ENCODE measurements at regions of chr21 and their contacts with region 1.

Region 1: GRCh38 chr21:34202553-34203372 is 129.4 kb downstream of the MRPS6 start:
- DNase-seq: peak; percentile 38 to 48
- H3K4me3 ChIP-seq: peak overlapping the region; percentile 57
- H3K4me3 Mint-ChIP-seq: peak overlapping the region; percentile 85
- H3K27ac Mint-ChIP-seq: peak overlapping the region; percentile 87
- H3K4me1 ChIP-seq: peaks cover 16% of the 10 kb centered on the region
- H3K4me1 Mint-ChIP-seq: peaks cover 17% of the 10 kb centered on the region
- H3K27me3 ChIP-seq: no peaks in the 10 kb centered on the region
- H3K27me3 Mint-ChIP-seq: no peaks in the 10 kb centered on the region
- CTCF ChIP-seq: no peak

Region 2: DNA sequence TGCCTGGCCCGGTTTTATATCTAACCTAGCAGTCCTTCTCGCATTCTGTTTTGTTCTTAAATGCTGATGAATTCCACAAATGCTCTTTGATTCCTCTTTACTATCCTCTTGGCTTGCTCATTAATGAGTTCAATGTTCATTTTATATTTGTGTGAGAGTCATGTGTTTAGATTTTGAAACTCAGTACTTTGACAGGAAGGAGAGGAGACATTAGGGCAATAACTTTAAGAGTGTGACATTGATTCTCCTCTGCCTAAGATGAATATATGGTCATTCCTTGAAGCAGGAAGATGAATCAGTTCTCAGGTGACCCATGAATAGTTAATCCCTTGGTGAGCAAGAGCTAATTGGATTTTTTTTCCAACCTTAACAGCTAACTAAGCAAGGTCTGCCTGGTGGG is 45.2 kb before region 1 on chr21:
- CTCF ChIA-PET with region 1: no interaction called
- POLR2A ChIA-PET with region 1: interaction called, 11 read pairs
- intact Hi-C with region 1: no loop called
- DNase-seq: no peak
- H3K4me3 ChIP-seq: no peak overlapping the region
- H3K4me3 Mint-ChIP-seq: no peak overlapping the region
- H3K27ac Mint-ChIP-seq: no peak overlapping the region
- H3K4me1 ChIP-seq: no peaks in the 10 kb centered on the region
- H3K4me1 Mint-ChIP-seq: no peaks in the 10 kb centered on the region
- H3K27me3 ChIP-seq: no peaks in the 10 kb centered on the region
- H3K27me3 Mint-ChIP-seq: no peaks in the 10 kb centered on the region
- CTCF ChIP-seq: no peak

Region 3: DNA sequence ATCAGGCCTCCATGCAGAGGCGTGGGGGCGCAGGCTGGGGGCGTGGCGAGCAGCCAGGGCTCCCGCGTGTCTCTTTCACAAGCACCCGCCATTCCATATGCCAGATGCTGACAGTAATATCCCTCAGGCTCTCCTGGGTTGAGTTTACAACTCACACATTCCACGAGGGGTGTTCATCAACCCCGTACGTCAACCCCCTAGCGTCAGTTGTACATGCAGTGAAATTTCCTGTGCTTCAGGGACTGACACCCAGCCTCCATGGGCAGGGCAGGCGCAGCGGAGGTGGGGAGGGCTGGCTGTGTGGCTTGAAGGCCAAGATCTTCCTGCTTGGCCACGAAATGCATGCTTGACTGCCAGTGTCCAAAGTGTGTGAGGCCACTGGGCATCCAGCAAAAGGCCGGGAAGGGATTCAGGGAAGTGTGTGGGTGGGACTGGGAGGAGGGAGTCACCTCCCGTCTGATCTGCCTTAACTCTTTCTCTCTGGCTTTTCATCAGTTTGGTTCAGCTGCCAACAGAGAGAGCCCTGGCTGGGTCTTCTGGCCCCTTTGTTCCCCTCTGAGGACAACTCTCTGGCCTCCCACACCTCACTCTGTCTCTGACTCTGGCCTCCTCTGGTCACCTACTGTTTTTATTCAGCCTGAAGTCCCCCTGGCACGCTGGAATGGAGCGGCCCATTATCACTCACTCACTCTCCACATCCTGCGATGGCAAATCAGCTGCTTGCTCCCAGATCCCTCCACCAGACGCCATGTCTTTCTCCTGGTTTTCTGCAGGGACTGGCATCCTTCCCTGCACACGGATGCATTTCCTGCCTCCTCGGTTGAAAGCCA is 499.8 kb after region 1 on chr21:
- CTCF ChIA-PET with region 1: no interaction called
- POLR2A ChIA-PET with region 1: no interaction called
- intact Hi-C with region 1: no loop called
- DNase-seq: no peak
- H3K4me3 ChIP-seq: no peak overlapping the region
- H3K4me3 Mint-ChIP-seq: no peak overlapping the region
- H3K27ac Mint-ChIP-seq: no peak overlapping the region
- H3K4me1 ChIP-seq: no peaks in the 10 kb centered on the region
- H3K4me1 Mint-ChIP-seq: peaks cover 8% of the 10 kb centered on the region
- H3K27me3 ChIP-seq: no peaks in the 10 kb centered on the region
- H3K27me3 Mint-ChIP-seq: no peaks in the 10 kb centered on the region
- CTCF ChIP-seq: no peak

Measured in Caco-2 (cell line).